ENCODE measurements at regions of chr3 and their contacts with region 1.

Region 1: DNA sequence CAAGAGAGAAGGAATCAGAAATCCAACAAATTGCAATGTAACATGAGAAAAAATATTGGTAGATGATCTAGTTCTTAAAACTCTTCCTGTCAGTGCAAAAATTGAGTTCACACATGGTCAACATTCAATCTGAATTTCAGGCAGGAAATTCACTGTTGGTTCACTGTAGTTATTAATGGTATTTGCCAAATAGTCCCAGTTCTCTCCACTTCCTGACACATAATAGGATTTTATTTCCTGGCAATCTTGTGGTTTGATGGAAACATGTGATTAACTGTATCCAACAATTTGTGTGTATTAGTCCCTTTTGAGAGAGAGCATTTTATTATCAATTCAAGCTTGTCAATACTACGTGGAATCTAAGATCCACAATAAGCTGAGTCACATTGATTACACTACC is 1103.1 kb downstream of the ROBO2 start:
- DNase-seq: no peak
- H3K4me3 ChIP-seq: no peak overlapping the region
- CTCF ChIP-seq: no peak
- POLR2A ChIP-seq: no peak

Region 2: GRCh38 chr3:77898621-77899020 is 244.4 kb before region 1 on chr3:
- intact Hi-C with region 1: no loop called
- DNase-seq: no peak
- H3K4me3 ChIP-seq: no peak overlapping the region
- CTCF ChIP-seq: no peak
- POLR2A ChIP-seq: no peak

Region 3: DNA sequence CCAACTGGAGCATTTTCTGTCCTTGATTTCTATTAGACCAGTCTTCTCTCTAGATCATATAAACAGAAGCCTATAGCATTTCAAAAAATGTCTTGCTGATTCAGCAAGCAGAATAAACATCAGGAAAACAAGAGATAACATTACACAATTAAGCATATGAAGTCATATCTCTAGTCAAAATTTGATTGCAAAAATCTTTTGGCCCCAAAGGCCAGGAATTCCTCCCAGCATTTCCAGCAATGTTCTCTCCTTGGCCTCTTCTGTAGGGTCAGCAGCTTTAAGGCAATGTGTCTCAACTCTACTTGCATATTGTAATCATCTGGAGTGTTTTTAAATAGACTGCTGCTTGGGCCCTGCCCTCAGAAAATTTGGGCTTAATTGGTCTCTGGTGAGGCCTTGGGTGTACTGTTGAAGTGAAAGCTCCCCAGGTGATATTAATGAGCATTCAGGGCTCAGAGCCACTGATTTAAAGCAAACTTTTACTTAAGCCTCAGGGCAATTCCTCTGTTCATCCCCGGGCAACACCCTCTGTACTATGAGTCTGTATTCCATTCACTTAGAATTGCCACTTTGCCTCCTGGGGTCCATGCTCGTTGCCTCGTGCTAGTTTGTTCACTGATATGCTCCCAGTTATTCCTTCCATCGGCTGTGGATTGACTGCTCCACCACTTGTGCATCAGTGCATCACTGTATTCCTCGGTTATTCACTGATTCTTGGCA is 30.5 kb before region 1 on chr3:
- intact Hi-C with region 1: no loop called
- DNase-seq: peak in 1 of 2 donors; percentile 21
- H3K4me3 ChIP-seq: no peak overlapping the region
- CTCF ChIP-seq: no peak
- POLR2A ChIP-seq: no peak

Region 4: GRCh38 chr3:78153979-78154378 is 11.0 kb after region 1 on chr3:
- intact Hi-C with region 1: loop called (anchors 1 kb)
- DNase-seq: no peak
- H3K4me3 ChIP-seq: no peak overlapping the region
- CTCF ChIP-seq: no peak
- POLR2A ChIP-seq: no peak

Region 5: DNA sequence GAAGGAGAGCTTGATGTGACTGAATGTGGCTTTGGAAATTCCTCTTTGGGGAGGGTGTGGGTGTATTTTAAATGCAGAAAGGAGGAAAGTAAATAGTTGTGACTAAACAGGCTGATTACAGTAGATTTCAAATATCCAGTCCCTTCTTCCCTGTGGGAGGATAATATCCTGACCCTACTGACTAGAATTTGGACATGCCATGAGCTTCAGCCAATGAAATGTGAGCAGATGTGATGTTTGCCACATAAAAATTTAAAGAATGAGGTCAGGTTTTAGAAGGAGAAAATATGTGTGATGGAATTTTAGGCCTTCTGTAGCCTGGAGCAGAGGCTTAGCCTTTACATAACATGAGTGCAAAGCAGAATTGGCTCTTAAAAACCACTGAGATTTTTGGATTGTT is 115.8 kb after region 1 on chr3:
- intact Hi-C with region 1: no loop called
- DNase-seq: no peak
- H3K4me3 ChIP-seq: no peak overlapping the region
- CTCF ChIP-seq: no peak
- POLR2A ChIP-seq: no peak